ENCODE measurements at regions of chr12 and their contacts with region 1.

Region 1: DNA sequence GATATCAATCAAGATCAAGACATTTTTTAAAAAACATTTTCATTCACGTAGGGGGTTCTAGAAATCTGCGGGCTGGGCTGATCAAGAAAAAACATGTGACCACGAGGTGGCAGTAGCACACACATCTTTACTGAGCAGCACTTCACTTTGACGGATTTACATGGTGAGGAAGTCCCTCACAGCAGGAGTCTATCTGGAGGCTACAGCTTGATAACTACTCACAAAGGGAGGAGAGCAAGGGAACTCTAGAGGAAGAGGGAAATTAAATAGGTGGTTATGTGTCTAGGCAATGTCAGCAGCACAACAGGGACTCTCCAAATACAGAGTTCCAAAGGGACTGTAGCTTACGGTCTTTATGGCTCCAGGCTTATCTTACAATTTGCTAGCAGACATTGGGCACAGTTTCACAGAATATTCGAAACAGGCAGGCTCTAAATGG is 248.1 kb downstream of the DPY19L2 start:
- DNase-seq: peak; percentile 70
- ATAC-seq: peak; percentile 49
- H3K4me3 Mint-ChIP-seq: no peak overlapping the region
- H3K27ac Mint-ChIP-seq: no peak overlapping the region
- H3K4me1 Mint-ChIP-seq: no peaks in the 10 kb centered on the region
- H3K27me3 Mint-ChIP-seq: no peaks in the 10 kb centered on the region
- CTCF ChIP-seq: peak; percentile 47

Region 2: GRCh38 chr12:63410197-63410596 is 10.0 kb before region 1 on chr12:
- CTCF ChIA-PET with region 1: interaction called, 11 read pairs
- POLR2A ChIA-PET with region 1: no interaction called
- intact Hi-C with region 1: no loop called
- DNase-seq: no peak
- ATAC-seq: no peak
- H3K4me3 Mint-ChIP-seq: no peak overlapping the region
- H3K27ac Mint-ChIP-seq: no peak overlapping the region
- H3K4me1 Mint-ChIP-seq: peaks cover 3% of the 10 kb centered on the region
- H3K27me3 Mint-ChIP-seq: no peaks in the 10 kb centered on the region
- CTCF ChIP-seq: no peak

Measured in activated CD8-positive, alpha-beta T cell treated with anti-CD3 and anti-CD28 coated beads for 36 hours (primary cell).